Transverse colon (tissue), 4 donors: ENCODE measurements at regions of chr1 and their contacts with region 1.

Region 1: GRCh38 chr1:88061492-88062177 is 622.4 kb upstream of the PKN2 start:
- DNase-seq: peak; percentile 58
- H3K4me3 ChIP-seq: no peak overlapping the region
- H3K27ac ChIP-seq: no peak overlapping the region
- H3K4me1 ChIP-seq: no peaks in the 10 kb centered on the region
- H3K27me3 ChIP-seq: no peaks in the 10 kb centered on the region
- CTCF ChIP-seq: peak; percentile 63 to 89 (median 73)
- EP300 ChIP-seq: no peak
- POLR2A ChIP-seq: no peak

Region 2: DNA sequence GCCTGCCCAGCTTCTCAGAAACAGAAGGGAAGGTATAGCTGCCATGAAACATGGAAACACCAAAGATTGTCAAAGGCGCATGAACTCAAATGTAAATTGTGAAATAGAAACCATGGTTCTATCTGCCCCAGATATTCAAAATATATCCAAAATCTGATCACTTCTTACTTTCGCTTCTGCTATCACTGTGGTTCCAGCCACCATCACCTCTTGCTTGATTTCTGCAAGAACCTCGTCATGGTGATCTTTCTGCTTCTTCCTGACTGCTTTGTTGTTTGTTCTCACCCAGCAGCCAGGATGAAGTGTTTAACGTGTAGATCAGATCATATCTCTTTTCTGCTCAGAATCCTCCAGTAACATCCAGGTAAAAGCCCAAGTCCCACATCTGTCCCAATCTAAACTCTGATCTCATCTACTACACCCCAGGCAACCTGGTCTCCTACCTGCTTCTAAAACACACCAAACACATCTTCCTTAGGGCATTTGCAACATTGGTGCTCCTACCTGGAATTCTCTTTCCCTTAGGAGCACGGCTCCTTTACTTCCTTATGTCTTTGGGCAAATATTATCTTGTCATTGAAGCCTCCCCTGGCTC is 743.5 kb before region 1 on chr1:
- in situ Hi-C with region 1: loop called in 1 of 4 experiments (anchors 25 kb)
- intact Hi-C with region 1: no loop called
- DNase-seq: no peak
- H3K4me3 ChIP-seq: no peak overlapping the region
- H3K27ac ChIP-seq: no peak overlapping the region
- H3K4me1 ChIP-seq: no peaks in the 10 kb centered on the region
- H3K27me3 ChIP-seq: no peaks in the 10 kb centered on the region
- CTCF ChIP-seq: no peak
- EP300 ChIP-seq: no peak
- POLR2A ChIP-seq: no peak

Region 3: GRCh38 chr1:88079036-88079435 is 17.4 kb after region 1 on chr1:
- in situ Hi-C with region 1: no loop called
- intact Hi-C with region 1: no loop called
- DNase-seq: no peak
- H3K4me3 ChIP-seq: no peak overlapping the region
- H3K27ac ChIP-seq: no peak overlapping the region
- H3K4me1 ChIP-seq: no peaks in the 10 kb centered on the region
- H3K27me3 ChIP-seq: no peaks in the 10 kb centered on the region
- CTCF ChIP-seq: no peak
- EP300 ChIP-seq: no peak
- POLR2A ChIP-seq: no peak